ENCODE measurements at regions of chr1 and their contacts with region 1.

Region 1: DNA sequence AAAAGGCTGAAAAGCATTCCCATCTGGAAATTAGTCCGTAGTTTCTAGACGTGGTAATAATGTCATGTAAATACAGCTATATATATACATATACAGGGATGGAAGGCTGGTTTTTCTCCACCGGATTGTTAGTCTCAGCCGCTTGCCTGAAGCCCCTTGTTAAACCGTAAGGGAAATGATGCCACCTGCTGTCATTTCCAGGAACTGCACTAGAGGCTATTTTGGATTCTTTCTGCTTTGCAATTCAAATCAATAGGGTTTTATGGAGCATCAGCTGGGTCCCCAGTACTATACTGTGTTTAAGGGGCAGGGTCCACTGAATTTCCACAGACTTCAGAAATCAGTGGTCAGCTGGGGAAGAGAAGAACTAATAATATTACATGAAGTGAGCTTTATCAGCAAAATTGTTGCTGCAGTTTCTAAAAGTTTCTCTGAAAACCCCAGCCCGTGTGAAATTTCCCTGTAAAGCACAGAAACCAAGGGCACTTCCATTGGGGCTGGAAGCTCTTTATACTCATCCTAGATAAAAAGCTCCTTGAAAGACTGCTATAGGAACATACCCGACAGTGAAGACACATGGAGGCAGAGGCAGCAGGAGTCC is 33.8 kb upstream of the MPZL1 start:
- DNase-seq: peak; percentile 87
- ATAC-seq: peak; percentile 76
- H3K4me3 Mint-ChIP-seq: no peak overlapping the region
- H3K27ac Mint-ChIP-seq: no peak overlapping the region
- H3K4me1 Mint-ChIP-seq: peaks cover 25% of the 10 kb centered on the region
- H3K27me3 Mint-ChIP-seq: no peaks in the 10 kb centered on the region

Region 2: GRCh38 chr1:167401260-167401873 is 286.7 kb before region 1 on chr1:
- CTCF ChIA-PET with region 1: interaction called, 5 read pairs
- POLR2A ChIA-PET with region 1: no interaction called
- intact Hi-C with region 1: loop called in 1 of 2 experiments (anchors 5 kb)
- DNase-seq: peak; percentile 64
- ATAC-seq: peak; percentile 71
- H3K4me3 Mint-ChIP-seq: no peak overlapping the region
- H3K27ac Mint-ChIP-seq: no peak overlapping the region
- H3K4me1 Mint-ChIP-seq: no peaks in the 10 kb centered on the region
- H3K27me3 Mint-ChIP-seq: no peaks in the 10 kb centered on the region

Region 3: DNA sequence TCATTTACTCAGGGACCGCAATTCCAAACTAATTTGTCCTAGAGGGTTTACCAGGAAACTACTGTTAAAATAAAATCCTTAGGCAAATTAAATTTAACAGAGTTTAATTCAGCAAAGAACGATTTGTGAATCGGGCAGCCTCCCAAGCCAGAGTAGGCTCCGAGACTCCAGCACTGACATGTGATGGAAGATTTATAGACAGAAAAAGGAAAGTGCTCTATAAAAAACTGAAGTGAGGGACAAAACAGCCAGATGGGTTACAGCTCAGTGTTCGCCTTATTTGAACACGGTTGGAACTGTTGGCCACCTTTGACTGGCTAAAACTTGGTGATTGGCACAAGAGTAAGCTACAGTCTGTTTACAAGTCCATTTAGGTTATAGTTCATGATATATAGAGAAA is 93.2 kb before region 1 on chr1:
- CTCF ChIA-PET with region 1: interaction called, 135 read pairs
- POLR2A ChIA-PET with region 1: no interaction called
- intact Hi-C with region 1: loop called (anchors 1 kb)
- DNase-seq: no peak
- ATAC-seq: no peak
- H3K4me3 Mint-ChIP-seq: no peak overlapping the region
- H3K27ac Mint-ChIP-seq: no peak overlapping the region
- H3K4me1 Mint-ChIP-seq: peaks cover 2% of the 10 kb centered on the region
- H3K27me3 Mint-ChIP-seq: no peaks in the 10 kb centered on the region

Region 4: DNA sequence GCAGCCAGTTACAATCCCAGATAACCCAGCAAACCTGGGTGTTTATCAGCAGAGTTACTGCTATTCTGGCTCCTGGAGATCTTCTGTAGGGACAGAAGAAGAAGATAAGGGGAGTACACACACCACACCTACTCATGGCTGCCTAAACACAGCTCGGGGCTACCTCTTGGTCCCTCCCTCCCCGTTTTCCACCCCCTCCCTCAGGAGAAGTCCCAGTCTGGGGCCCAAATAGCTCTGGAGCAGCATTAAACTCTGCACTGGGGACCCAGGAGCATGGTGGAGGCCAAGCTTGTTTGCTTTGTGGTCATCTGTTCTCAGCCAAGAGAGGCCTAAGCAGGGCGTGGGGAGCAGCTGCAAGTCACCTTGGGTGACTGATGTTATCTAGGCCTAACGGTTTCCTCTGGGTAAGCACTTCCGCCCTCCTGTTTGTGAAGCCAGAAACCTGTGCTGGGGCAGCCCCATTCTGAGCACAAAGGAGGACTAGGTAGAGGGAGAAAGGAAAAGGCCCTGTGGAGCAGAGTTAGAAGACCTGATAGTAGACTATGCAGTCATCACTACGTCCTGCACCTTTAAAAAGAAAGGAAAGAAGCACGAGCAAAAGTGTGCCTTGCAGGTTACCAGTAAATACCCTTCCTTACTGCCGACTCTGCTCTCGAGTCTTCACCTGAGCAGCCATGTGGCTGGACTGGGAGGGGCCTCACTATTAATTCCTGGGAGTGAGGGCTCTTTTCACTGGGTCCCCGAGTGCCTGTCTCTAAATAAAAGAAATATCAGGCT is 60.0 kb before region 1 on chr1:
- CTCF ChIA-PET with region 1: interaction called, 9 read pairs
- POLR2A ChIA-PET with region 1: no interaction called
- intact Hi-C with region 1: loop called (anchors 2 kb)
- DNase-seq: peak; percentile 87
- ATAC-seq: peak; percentile 85
- H3K4me3 Mint-ChIP-seq: peak overlapping the region; percentile 85
- H3K27ac Mint-ChIP-seq: peak overlapping the region; percentile 98
- H3K4me1 Mint-ChIP-seq: peaks cover 53% of the 10 kb centered on the region
- H3K27me3 Mint-ChIP-seq: no peaks in the 10 kb centered on the region

Region 5: DNA sequence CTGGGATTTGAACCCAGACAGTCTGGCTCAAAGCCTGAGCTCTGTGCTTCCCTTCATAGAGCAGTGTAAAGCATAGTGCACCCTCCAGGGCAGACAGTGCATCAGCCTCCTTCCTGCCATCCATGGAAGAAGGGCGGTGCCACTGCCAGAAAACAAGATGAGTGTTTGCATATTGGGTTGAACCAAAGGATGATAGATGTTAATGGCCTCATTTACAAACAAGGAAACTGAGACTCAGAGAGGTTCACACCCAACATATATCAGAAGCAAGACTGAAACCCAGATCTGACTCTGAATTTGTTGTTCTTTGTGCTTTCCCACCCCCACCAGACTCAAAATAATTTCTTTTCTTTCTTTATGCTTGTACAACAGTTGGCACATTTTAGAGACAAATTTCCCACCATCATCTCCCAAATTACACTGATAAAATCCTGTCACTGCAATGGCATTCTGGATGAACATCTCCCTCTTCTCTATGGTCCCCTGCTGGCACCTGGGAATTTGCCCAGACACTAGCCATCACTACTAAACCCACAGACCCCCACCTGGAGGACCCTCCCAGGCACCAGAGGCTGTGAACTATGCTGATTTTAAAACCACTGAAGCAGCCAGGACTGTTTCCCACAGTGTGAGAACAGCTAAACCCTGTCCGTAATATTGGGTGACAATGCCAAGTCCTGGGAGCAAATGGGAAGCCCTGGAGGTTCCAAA is 11.7 kb before region 1 on chr1:
- CTCF ChIA-PET with region 1: interaction called, 17 read pairs
- POLR2A ChIA-PET with region 1: no interaction called
- intact Hi-C with region 1: no loop called
- DNase-seq: peak; percentile 42
- ATAC-seq: peak; percentile 66
- H3K4me3 Mint-ChIP-seq: no peak overlapping the region
- H3K27ac Mint-ChIP-seq: peak overlapping the region; percentile 49
- H3K4me1 Mint-ChIP-seq: peaks cover 33% of the 10 kb centered on the region
- H3K27me3 Mint-ChIP-seq: no peaks in the 10 kb centered on the region

Region 6: DNA sequence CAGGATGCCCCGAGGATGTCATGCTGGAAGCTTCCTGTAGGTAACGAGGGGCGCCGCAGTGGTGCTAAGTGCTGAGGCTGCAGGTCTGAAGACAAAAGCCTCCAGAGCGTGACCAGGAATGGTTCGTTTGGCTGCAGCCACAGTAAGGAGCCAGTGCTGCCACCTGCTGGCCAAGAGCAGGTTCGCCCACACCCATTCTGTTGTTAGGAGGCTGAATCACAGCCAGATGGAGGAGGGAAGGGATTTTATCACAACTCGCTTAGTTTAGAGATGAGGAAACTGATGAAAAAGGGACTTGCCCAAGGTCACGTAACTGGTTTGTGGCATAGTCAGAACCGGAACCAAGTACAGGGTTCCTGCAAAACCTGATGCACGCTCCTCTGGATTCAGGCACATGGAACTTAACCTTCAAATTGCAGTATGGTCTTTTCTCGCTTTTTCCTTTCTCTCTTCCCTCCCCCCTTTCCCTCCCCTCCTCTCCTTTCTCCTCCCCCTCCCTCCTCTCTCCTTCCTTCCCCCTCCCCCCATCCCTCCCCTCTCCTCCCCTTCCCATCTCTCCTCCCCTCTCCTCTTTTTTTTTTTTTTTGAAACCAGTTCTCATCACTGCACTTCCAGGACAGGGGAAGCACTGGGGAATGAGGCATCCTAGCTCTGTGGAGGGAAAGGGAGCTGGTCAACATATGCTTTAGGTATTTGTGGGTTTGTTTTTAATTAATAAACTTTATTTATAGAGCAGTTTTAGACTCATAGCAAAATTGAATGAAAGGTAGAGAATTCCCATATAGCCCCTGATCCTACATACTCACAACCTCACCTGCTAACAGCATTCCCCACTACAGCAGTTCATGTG is 115.6 kb after region 1 on chr1:
- CTCF ChIA-PET with region 1: no interaction called
- POLR2A ChIA-PET with region 1: no interaction called
- intact Hi-C with region 1: no loop called
- DNase-seq: peak; percentile 96
- ATAC-seq: peak; percentile 94
- H3K4me3 Mint-ChIP-seq: peak overlapping the region; percentile 64
- H3K27ac Mint-ChIP-seq: peak overlapping the region; percentile 97
- H3K4me1 Mint-ChIP-seq: peaks cover 24% of the 10 kb centered on the region
- H3K27me3 Mint-ChIP-seq: peaks cover under 1% of the 10 kb centered on the region